Sigmoid colon (tissue), 7 donors: ENCODE measurements at regions of chr2 and their contacts with region 1.

Region 1: DNA sequence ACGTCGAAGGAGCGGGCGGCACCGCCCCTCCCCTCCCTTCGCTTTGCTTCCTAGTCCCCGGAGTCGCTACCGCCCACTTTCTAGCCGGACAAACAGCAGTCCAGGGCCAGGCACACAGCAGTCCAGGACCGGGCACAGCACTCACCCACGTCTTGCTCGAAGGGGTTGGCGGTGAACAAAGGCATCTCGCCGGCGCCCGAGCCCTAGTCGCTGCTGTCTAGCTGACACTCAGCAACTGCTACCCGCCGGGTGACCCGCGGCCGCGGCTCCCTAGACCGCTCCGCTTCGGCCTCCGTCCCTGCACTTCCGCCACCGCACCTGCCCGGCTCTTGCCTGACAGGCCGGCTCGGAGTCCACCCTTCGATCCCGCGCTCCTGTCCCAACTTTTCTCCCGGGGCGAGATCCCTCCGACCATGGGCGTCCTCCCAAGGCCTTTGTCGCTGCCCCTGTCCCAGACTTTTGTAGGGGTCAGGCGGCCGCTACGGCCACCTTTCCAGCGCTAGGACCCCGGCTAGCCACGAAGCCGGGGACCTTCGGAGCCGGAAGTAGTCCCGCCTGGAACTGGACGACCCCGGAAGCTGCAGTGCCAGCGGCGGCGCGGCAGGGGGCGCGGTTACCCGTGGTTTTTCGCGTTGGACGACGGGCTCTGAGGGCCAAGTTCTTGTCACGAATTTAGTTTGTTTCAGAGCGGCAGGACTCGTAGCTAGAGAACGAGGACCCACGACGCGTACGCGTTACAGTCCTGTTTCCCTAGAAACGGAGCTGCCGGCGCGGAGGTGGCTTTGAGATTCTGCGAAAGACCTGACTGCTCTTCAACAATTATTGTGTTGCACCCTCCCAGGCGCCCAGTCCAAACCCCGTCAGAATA is at the start of gene STAM2:
- DNase-seq: peak; percentile 95
- H3K4me3 ChIP-seq: peak within 1 kb of the TSS; percentile 64 to 94 (median 77)
- H3K27ac ChIP-seq: peak within 1 kb of the TSS; percentile 89 to 98 (median 96)
- H3K4me1 ChIP-seq: peaks cover 0 to 34% (median 23%) of the 10 kb centered on the region in 4 donors
- H3K27me3 ChIP-seq: no peaks in the 10 kb centered on the region
- CTCF ChIP-seq: peak; percentile 82 to 94 (median 88)
- EP300 ChIP-seq: peak in 1 of 4 donors; percentile 8
- POLR2A ChIP-seq: peak; percentile 71 to 77
- total RNA-seq, gene STAM2: 26.3 to 36.7 (median 33.5) TPM

Region 2: GRCh38 chr2:151828143-151828889 is 347.4 kb before region 1 on chr2 and contains the start of gene ARL5A:
- intact Hi-C with region 1: loop called (anchors 2 kb)
- DNase-seq: peak; percentile 98
- H3K4me3 ChIP-seq: peak within 1 kb of the TSS; percentile 82 to 98 (median 92)
- H3K27ac ChIP-seq: peak within 1 kb of the TSS; percentile 88 to 90 (median 88)
- H3K4me1 ChIP-seq: peaks cover 0 to 40% (median 28%) of the 10 kb centered on the region in 4 donors
- H3K27me3 ChIP-seq: no peaks in the 10 kb centered on the region
- CTCF ChIP-seq: no peak
- EP300 ChIP-seq: no peak
- POLR2A ChIP-seq: peak; percentile 53 to 63
- total RNA-seq, gene ARL5A: 41.3 to 46.4 (median 43.9) TPM

Region 3: GRCh38 chr2:152717228-152718075 is 541.8 kb after region 1 on chr2 and contains the start of gene PRPF40A:
- intact Hi-C with region 1: loop called (anchors 2 kb)
- DNase-seq: peak; percentile 99
- H3K4me3 ChIP-seq: peak within 1 kb of the TSS; percentile 87 to 94 (median 94)
- H3K27ac ChIP-seq: peak within 1 kb of the TSS; percentile 96 to 98 (median 97)
- H3K4me1 ChIP-seq: peaks cover 0 to 47% (median 36%) of the 10 kb centered on the region in 4 donors
- H3K27me3 ChIP-seq: no peaks in the 10 kb centered on the region
- CTCF ChIP-seq: no peak
- EP300 ChIP-seq: no peak
- POLR2A ChIP-seq: peak; percentile 76 to 85
- total RNA-seq, gene PRPF40A: 69.2 to 200 (median 80.7) TPM